RWPE1 (cell line): ENCODE measurements at regions of chr10 and their contacts with region 1.

Region 1: GRCh38 chr10:34994565-34995142 is 95.5 kb downstream of the CUL2 start:
- DNase-seq: peak; percentile 94
- H3K27ac ChIP-seq: peak overlapping the region; percentile 71
- CTCF ChIP-seq: peak; percentile 79

Region 2: DNA sequence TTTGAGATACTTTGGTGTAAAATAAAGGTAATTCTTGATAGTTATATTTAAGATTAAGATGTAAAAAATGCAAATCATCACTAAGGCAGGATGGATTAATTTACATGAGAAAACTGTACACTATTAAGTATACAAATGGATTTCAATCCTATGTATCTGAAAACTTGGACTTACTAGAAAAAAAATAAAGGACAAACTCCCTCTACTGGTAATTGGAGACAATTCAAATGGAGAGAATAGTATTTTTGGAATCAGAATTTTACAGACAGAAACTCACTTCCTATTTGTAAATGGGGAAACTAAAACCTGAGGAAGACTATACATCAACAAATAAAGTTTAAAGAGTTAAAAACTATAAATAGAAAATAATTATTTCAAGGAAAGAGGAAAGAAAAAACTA is 32.9 kb after region 1 on chr10:
- CTCF ChIA-PET with region 1: interaction called, 25 read pairs
- POLR2A ChIA-PET with region 1: no interaction called
- DNase-seq: no peak
- H3K27ac ChIP-seq: no peak overlapping the region
- CTCF ChIP-seq: peak; percentile 62